IMR-90 (cell line): ENCODE measurements at regions of chr12 and their contacts with region 1.

Region 1: DNA sequence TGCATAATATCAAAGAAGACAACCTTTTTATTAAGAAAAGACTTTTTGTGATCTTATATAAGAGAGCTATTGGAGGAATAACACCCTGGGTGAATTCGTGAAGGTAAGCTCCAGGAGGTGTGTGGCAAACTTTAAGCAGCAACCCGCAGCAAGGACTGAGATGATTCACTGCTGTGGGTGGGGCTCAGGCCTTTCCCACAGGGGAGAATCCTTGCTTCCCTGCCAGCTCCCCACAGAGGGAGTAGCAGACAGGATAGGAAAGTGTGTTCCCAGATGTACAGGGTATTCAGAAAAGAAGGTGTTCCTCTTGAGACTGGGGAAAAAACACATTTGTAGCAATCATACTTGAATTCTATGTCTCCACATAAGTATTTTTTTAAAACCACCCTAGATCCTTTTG is 9.2 kb downstream of the NDUFA12 start:
- DNase-seq: peak; percentile 68
- ATAC-seq: peak; percentile 63
- H3K4me3 ChIP-seq: no peak overlapping the region
- H3K27ac ChIP-seq: no peak overlapping the region
- H3K4me1 ChIP-seq: no peaks in the 10 kb centered on the region
- H3K27me3 ChIP-seq: no peaks in the 10 kb centered on the region
- CTCF ChIP-seq: no peak
- POLR2A ChIP-seq: no peak
- RAD21 ChIP-seq: no peak

Region 2: DNA sequence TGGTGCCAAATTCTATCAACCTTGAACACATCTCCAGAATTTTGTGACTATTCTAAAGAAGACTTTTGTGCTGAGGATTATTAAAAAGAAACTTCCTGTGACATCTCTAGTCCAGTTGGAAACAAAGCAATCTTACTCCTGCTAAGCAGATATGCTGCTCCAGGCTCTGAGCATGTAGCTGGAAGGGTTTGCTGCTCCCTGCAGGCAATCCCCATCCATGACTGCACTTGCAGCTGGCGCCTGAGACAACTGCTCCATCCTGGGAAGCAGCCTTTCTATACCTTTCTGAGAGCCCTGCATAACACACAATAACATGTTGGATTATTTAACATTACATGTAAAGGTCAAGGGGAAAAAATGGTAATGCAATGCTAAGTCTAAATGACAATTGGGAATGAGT is 95.9 kb before region 1 on chr12:
- CTCF ChIA-PET with region 1: no interaction called
- POLR2A ChIA-PET with region 1: no interaction called
- dilution Hi-C with region 1: no loop called
- in situ Hi-C with region 1: no loop called
- intact Hi-C with region 1: no loop called
- DNase-seq: no peak
- ATAC-seq: no peak
- H3K4me3 ChIP-seq: no peak overlapping the region
- H3K27ac ChIP-seq: no peak overlapping the region
- H3K4me1 ChIP-seq: no peaks in the 10 kb centered on the region
- H3K27me3 ChIP-seq: no peaks in the 10 kb centered on the region; the same call in none of the 2 replicates
- CTCF ChIP-seq: no peak
- POLR2A ChIP-seq: no peak
- RAD21 ChIP-seq: no peak

Region 3: DNA sequence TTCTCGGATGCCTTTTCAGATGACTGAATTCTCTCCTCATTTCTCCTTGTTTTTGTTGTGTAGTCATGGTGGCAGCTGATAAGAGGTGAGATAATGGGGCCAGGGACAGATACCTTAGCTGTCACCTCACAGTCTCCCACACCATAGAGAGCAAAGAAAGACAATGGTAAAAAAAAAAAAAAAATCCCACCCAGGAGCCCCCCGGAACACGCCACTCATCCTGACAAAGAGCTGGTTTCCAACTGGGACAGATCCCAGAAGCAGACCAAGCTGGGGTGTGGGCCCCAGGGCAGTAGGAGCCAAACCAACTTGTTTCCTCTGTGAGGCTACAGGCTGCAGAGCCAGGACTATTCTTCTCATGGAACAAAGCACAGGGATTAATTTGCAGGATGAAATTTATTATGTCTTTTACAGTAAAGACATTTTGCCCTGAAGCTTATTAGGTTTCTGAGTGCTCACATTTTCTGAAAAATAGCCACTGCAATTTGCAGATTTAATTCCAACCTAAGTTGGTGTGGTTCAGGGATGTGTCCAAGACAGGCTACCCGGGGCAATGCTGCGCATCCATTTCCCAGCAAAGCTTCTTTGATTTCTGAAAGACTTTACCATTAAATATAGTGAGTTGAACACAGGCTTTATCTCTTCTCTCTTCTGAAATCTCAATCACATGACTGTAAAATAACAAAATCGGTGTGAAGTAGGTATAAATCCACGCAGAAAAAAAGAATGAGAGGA is 42.9 kb before region 1 on chr12:
- CTCF ChIA-PET with region 1: no interaction called
- POLR2A ChIA-PET with region 1: interaction called, 17 read pairs
- dilution Hi-C with region 1: no loop called
- in situ Hi-C with region 1: no loop called
- intact Hi-C with region 1: no loop called
- DNase-seq: no peak
- ATAC-seq: no peak
- H3K4me3 ChIP-seq: no peak overlapping the region
- H3K27ac ChIP-seq: no peak overlapping the region
- H3K4me1 ChIP-seq: no peaks in the 10 kb centered on the region
- H3K27me3 ChIP-seq: peaks cover 15% of the 10 kb centered on the region
- CTCF ChIP-seq: no peak
- POLR2A ChIP-seq: no peak
- RAD21 ChIP-seq: no peak